Psoas muscle (tissue), 8 donors: ENCODE measurements at regions of chr9 and their contacts with region 1.

Region 1: DNA sequence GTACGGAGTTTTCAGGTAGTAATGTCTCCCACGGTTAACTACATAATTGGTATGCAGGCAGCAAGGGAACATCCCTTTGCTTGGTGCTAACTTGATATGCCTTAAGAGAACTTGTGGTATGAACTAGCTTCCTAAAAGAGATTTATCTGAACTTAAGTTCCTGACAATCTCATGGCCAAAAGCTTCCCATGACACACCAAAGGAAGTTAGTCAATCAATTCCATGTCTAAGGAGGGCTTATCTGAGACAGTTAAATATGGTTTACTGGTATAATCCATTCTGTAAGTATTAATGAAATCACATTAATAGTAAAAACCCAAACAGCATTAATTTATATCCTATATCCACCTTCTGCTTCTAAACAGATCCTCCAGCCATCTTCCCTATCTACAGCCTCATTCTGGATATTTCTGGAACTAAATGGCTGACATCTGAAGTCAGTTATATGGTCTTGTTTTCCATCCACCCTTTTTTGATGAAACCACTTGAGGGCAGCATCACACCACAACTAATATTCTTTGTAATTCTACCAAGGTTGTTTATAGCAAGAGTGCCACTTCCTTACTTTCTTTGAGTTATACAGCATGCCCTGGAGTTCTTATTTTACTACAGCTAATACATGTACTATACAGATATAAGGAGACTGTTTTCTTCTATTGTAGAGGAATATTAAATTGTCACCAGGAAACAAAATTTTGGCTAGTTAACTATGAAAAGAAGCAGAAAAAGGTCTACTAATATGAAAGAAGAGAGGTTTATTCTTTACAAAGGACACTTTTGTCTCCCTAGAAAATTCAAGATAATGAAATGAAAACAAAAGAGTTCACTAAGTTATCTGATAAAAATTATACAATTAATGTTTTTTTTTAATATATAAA is 34.7 kb downstream of the SHOC1 start:
- DNase-seq: no peak
- ATAC-seq: peak; percentile 81 to 88 (median 82)
- H3K4me3 ChIP-seq: no peak overlapping the region
- H3K27ac ChIP-seq: no peak overlapping the region
- H3K4me1 ChIP-seq: no peaks in the 10 kb centered on the region
- H3K27me3 ChIP-seq: no peaks in the 10 kb centered on the region
- CTCF ChIP-seq: peak; percentile 75

Region 2: GRCh38 chr9:112355427-112355897 is 595.5 kb after region 1 on chr9:
- intact Hi-C with region 1: loop called (anchors 5 to 10 kb)
- DNase-seq: no peak
- ATAC-seq: no peak
- H3K4me3 ChIP-seq: no peak overlapping the region
- H3K27ac ChIP-seq: no peak overlapping the region
- H3K4me1 ChIP-seq: no peaks in the 10 kb centered on the region
- H3K27me3 ChIP-seq: no peaks in the 10 kb centered on the region
- CTCF ChIP-seq: no peak

Region 3: GRCh38 chr9:112361601-112362000 is 601.6 kb after region 1 on chr9:
- intact Hi-C with region 1: loop called (anchors 5 to 10 kb)
- DNase-seq: no peak
- ATAC-seq: peak in 2 of 4 donors; percentile 46 to 76
- H3K4me3 ChIP-seq: no peak overlapping the region
- H3K27ac ChIP-seq: no peak overlapping the region
- H3K4me1 ChIP-seq: no peaks in the 10 kb centered on the region
- H3K27me3 ChIP-seq: no peaks in the 10 kb centered on the region
- CTCF ChIP-seq: peak; percentile 71